WTC11 (cell line): ENCODE measurements at regions of chr1 and their contacts with region 1.

Region 1: DNA sequence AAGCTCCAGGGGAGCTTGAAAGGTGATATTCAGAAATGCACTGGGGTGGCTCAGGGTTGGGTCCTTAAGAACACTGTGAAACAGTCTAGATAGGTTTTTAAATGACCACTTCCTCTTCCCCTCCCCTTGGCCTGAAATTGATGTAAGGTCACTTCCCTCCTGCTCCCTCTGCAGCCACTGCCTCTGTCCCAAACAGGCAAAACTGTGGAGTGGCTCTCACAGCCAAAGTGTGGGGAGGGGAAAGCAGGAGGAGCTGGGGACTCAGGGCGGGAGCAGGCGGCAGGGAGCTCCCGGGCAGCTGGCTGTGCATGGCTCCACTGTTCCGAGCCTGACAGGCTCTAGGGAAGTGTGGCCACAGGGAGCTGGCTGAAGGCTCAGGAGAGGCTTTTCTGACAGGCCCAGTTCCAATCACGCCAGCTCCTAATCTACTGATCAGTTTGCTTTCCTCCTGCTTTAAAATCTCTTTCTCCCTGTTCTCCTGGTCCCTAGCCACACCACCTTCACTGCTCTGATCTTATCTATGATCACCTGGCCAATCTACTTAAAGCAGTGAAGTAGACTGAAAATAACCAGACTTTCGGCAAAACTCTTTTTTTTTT is 5.1 kb upstream of the CSRP1 start:
- DNase-seq: peak; percentile 69
- ATAC-seq: peak; percentile 81
- H3K4me3 Mint-ChIP-seq: 0 out of 2 replicates have a peak overlapping the region, but pooled peaks have one; percentile 29
- H3K27ac Mint-ChIP-seq: peak overlapping the region; percentile 78; the same call in 1 of the 2 replicates
- H3K4me1 Mint-ChIP-seq: peaks cover 25% of the 10 kb centered on the region
- H3K27me3 Mint-ChIP-seq: peaks cover 25% of the 10 kb centered on the region
- CTCF ChIP-seq: no peak

Region 2: GRCh38 chr1:201463071-201463552 is 48.9 kb before region 1 on chr1:
- CTCF ChIA-PET with region 1: interaction called, 27 read pairs
- POLR2A ChIA-PET with region 1: no interaction called
- DNase-seq: no peak
- ATAC-seq: peak; percentile 83
- H3K4me3 Mint-ChIP-seq: no peak overlapping the region
- H3K27ac Mint-ChIP-seq: 0 out of 2 replicates have a peak overlapping the region, but pooled peaks have one; percentile 5
- H3K4me1 Mint-ChIP-seq: peaks cover 26% of the 10 kb centered on the region
- H3K27me3 Mint-ChIP-seq: peaks cover 4% of the 10 kb centered on the region; the same call in 1 of the 2 replicates
- CTCF ChIP-seq: no peak

Region 3: GRCh38 chr1:201500670-201501120 is 11.3 kb before region 1 on chr1:
- CTCF ChIA-PET with region 1: interaction called, 276 read pairs
- POLR2A ChIA-PET with region 1: interaction called, 24 read pairs
- DNase-seq: no peak
- ATAC-seq: peak; percentile 16
- H3K4me3 Mint-ChIP-seq: no peak overlapping the region
- H3K27ac Mint-ChIP-seq: peak overlapping the region; percentile 77
- H3K4me1 Mint-ChIP-seq: peaks cover 49% of the 10 kb centered on the region
- H3K27me3 Mint-ChIP-seq: peaks cover 2% of the 10 kb centered on the region
- CTCF ChIP-seq: no peak

Region 4: DNA sequence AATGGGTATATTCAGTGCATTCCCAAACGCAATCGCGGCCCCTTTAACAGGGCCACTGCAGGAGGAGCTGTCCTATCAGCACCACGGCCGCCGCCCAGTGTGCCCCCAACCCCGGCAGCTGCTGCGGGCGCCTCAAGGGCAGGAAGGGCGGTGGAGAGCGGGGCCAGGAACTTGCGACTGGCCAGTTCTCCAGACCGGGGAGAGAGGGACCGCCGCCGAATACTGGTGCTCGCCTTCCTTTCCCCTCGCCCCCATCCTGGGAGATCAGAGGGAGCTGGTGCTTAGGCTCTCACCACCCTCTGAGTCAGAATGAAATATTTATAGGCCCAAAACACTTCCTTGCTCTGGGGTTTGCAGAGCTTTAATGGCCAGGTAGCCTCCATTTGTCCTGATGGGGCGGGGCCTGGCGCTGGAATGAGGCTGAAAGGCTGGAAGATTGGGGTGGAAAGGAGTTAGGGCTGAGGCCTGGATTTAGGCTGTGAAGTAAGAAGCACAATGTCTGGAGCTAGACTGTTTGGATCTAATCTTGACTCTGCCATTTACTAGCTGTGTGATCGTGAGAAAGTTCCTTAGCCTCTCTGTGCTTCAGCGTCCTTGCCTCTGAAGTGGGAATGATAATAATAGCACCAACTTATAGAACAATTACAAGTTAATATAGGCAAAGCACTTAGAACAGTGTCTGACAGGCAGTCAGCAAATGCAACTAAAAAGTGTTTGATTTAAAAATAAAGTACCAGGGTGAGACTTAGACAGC is 102.4 kb after region 1 on chr1:
- CTCF ChIA-PET with region 1: interaction called, 12 read pairs
- POLR2A ChIA-PET with region 1: no interaction called
- DNase-seq: peak; percentile 89
- ATAC-seq: peak; percentile 96
- H3K4me3 Mint-ChIP-seq: peak overlapping the region; percentile 66
- H3K27ac Mint-ChIP-seq: no peak overlapping the region
- H3K4me1 Mint-ChIP-seq: peaks cover 28% of the 10 kb centered on the region
- H3K27me3 Mint-ChIP-seq: peaks cover 4% of the 10 kb centered on the region
- CTCF ChIP-seq: no peak

Region 5: DNA sequence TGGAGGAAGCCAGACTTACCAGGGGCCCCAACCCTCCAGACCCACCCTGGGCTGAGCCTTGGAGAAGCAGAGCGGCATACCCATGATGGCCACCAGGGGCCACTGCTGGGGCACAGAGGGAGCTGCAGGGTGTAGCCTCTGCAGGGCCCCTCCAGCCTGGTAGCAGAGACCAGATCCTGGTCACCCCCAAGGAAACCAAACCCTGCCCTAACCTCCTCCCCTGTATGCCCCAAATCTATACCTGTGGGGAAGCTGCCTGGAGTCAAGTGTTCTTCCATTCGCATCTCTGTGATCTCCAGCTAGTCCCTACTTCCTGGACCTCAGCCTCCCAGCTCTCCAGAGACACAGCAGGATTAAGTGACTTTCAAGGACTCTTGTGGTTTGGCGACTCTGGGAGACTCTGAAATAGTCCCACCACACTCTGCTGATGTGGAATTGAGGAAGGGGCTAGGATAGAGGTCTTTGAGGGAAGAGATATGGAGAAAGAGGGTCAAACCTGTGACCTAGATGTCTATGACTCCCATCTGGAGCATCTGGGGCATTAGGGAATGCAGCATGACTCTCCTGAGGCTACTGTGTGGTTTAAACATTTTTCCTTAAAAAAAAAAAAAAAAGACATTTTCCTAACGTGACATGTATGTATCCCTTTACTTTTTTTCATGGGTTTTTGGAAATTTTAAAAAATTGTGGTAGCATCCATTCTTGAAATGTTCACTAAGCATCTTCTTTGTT is 197.7 kb after region 1 on chr1:
- CTCF ChIA-PET with region 1: interaction called, 11 read pairs
- POLR2A ChIA-PET with region 1: no interaction called
- DNase-seq: peak; percentile 87
- ATAC-seq: peak; percentile 98
- H3K4me3 Mint-ChIP-seq: no peak overlapping the region
- H3K27ac Mint-ChIP-seq: no peak overlapping the region
- H3K4me1 Mint-ChIP-seq: peaks cover 8% of the 10 kb centered on the region
- H3K27me3 Mint-ChIP-seq: no peaks in the 10 kb centered on the region
- CTCF ChIP-seq: peak; percentile 88